ENCODE measurements at regions of chr1 and their contacts with region 1.

Region 1: GRCh38 chr1:67274623-67275325 is 32.9 kb upstream of the IL12RB2 start:
- DNase-seq: peak; percentile 55
- H3K4me3 Mint-ChIP-seq: no peak overlapping the region
- H3K27ac Mint-ChIP-seq: peak overlapping the region; percentile 90
- H3K4me1 Mint-ChIP-seq: peaks cover 55% of the 10 kb centered on the region
- H3K27me3 Mint-ChIP-seq: no peaks in the 10 kb centered on the region

Region 2: DNA sequence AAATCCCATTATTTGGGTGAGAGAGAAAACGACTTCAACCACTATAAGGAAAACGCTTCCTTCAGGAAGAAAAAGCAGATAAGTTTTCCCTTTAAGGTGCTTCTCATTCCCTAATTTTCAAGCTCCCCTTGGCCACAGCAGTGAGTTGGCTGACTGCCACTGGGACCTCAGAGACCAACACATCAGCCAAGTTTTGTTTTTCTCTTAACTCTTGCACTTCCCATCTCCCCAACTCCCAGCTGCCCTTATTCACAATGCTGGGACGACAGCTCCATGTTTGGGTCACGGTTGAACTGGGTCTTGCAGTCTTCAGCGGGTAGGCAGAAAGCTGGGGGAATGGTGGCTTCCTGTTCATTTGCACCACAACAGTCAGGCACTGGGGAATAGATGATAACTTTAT is 721.9 kb before region 1 on chr1:
- CTCF ChIA-PET with region 1: no interaction called
- intact Hi-C with region 1: no loop called
- DNase-seq: no peak
- H3K4me3 Mint-ChIP-seq: no peak overlapping the region
- H3K27ac Mint-ChIP-seq: no peak overlapping the region
- H3K4me1 Mint-ChIP-seq: no peaks in the 10 kb centered on the region
- H3K27me3 Mint-ChIP-seq: peaks cover 8% of the 10 kb centered on the region

Region 3: DNA sequence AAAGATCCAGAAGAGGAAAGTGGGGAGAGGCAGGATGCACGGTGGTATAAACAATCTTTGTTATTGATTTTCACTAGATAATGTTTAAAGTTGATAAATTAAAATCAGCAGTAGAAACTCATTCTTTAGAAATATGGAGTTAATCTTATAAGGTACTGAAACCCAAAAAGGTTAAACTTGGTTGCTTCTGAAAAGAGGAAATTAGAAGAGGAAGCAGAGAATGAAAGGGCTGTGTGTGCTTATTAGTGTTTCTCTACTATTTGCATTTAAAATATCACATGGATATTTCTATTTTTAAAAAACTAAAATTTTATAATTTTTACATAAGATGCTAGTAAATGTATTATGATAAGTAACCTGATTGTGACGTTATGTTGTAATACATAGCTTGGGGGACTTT is 164.4 kb before region 1 on chr1:
- CTCF ChIA-PET with region 1: no interaction called
- intact Hi-C with region 1: no loop called
- DNase-seq: no peak
- H3K4me3 Mint-ChIP-seq: no peak overlapping the region
- H3K27ac Mint-ChIP-seq: no peak overlapping the region
- H3K4me1 Mint-ChIP-seq: no peaks in the 10 kb centered on the region
- H3K27me3 Mint-ChIP-seq: no peaks in the 10 kb centered on the region

Region 4: DNA sequence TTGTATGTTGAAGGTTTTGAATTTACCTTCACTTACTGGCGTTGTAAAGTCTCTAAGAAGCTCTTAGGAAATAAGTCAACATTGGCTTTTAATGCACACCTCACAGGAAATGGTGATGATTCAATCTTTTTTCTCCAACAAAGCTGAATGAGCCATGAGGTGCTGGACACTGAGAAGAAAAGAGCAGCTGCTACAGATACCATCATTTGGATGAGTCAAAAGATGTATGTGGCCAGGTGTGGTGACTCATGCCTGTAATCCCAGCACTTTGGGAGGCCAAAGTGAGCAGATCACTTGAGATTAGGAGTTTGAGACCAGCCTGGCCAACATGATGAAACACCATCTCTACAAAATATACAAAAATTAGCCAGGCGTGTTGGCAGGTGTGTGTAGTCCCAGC is 111.8 kb before region 1 on chr1:
- CTCF ChIA-PET with region 1: no interaction called
- intact Hi-C with region 1: loop called (anchors 1 kb)
- DNase-seq: peak; percentile 76
- H3K4me3 Mint-ChIP-seq: peak overlapping the region; percentile 42
- H3K27ac Mint-ChIP-seq: peak overlapping the region; percentile 83
- H3K4me1 Mint-ChIP-seq: peaks cover 63% of the 10 kb centered on the region
- H3K27me3 Mint-ChIP-seq: no peaks in the 10 kb centered on the region

Region 5: DNA sequence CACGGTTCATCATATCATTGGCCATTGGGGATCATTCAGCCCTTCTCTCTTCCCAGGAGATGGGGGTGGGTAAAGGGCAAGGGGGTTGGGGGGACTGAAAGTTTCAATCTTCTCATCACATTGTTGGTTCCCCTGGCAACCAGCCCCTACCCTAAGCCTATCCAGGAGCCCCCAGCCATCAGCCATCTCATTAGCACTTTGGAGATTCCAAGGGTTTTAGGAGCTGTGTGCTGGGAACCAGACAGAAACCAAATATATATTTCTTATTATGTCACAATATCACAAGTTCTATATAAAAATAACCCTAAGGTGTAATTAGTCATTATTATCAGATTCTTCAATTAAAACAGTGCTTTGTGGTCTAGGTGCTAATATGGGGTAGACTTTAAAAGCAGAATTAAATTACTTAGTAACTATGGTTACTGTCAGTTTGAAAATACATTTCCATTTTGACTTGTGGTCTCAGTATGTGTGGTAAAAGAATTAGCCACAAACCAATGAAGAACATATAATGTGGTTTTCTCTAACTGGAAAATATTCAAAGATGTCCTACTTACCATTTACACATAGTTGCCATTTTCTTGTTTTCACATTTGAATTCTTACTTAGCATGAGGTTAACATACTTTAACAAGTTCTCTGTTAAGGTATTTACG is 80.4 kb before region 1 on chr1:
- CTCF ChIA-PET with region 1: no interaction called
- intact Hi-C with region 1: loop called (anchors 1 kb)
- DNase-seq: no peak
- H3K4me3 Mint-ChIP-seq: no peak overlapping the region
- H3K27ac Mint-ChIP-seq: no peak overlapping the region
- H3K4me1 Mint-ChIP-seq: peaks cover 39% of the 10 kb centered on the region
- H3K27me3 Mint-ChIP-seq: no peaks in the 10 kb centered on the region

Region 6: DNA sequence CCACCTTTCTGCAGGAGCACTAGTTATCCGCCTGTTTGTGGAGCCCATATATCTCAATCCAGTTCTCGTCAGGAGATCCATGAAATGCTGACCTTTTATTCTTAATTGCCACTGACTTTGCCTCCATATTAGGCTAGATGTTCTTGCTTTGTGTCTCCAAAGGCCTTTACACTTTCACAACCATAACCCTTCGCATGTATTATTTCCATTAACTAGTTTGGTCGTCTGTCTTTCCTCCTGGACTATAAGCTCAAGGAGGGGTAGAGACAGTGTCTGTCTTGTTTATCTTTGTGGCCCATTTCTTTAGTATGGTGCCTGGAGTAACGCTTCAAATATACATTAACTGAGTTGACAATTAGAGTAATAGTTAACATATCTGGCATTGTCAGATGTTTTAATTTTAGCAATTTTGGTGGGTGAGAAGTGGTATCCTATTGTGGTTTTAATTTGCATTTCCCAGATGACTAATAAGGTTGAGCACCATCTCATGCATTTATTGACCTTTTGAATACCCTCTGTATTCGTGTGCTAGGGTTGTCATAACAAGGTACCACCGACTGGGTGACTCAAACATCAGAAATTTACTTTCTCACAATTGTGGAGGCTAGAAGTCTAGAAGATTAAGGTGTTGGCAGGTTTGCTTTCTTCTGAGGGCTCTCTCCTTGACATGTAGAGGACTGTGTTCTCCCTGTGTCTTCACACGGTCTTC is 11.2 kb after region 1 on chr1:
- CTCF ChIA-PET with region 1: interaction called, 24 read pairs
- intact Hi-C with region 1: loop called (anchors 1 kb)
- DNase-seq: peak; percentile 55
- H3K4me3 Mint-ChIP-seq: no peak overlapping the region
- H3K27ac Mint-ChIP-seq: peak overlapping the region; percentile 65
- H3K4me1 Mint-ChIP-seq: peaks cover 52% of the 10 kb centered on the region
- H3K27me3 Mint-ChIP-seq: no peaks in the 10 kb centered on the region

Region 7: DNA sequence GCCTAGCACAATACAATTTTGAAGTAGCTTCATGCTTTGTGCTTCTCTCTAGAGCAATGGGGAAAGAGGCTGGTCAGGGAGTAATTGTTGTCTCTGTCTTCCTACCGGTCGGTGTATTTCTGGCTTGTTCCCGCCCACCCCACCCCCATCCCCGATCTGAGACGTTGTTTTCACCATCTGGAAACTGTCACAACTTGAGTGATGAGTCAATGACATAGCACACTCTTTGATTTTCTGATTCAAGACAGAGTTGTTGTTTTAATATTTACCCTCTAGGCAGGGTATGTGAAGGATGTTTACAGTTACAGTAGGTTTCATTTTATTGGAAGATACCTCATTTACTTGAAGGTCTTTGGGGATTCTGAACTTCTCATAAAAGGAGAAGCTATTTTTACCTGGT is 39.9 kb after region 1 on chr1:
- CTCF ChIA-PET with region 1: interaction called, 4 read pairs
- intact Hi-C with region 1: loop called (anchors 1 kb)
- DNase-seq: peak; percentile 56
- H3K4me3 Mint-ChIP-seq: peak overlapping the region; percentile 47
- H3K27ac Mint-ChIP-seq: peak overlapping the region; percentile 95
- H3K4me1 Mint-ChIP-seq: peaks cover 46% of the 10 kb centered on the region
- H3K27me3 Mint-ChIP-seq: no peaks in the 10 kb centered on the region

Region 8: DNA sequence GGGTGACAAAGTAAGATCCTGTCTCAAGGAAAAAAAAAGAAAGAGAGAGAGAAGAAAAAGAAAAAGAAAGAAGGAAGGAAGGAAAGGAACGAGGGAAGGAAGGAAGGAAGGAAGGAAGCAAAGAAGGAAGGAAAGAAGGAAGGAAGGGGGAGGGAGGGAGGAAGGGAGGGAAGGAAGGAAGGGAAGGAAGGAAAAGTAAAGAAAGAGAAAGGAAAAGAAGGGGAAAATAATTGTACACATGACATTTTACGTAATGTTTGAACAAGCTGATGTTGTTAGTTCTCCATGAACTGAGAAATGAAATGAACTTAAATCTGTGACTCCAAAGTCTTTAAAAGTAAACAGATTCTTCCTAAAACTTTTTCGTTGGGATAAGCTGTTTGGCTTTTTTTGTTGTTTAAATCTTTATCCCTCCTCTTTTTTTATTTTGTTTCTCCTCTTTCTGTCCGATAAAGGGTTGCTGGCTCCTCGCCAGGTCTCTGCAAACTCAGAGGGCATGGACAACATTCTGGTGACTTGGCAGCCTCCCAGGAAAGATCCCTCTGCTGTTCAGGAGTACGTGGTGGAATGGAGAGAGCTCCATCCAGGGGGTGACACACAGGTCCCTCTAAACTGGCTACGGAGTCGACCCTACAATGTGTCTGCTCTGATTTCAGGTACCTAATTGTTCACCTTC is 92.7 kb after region 1 on chr1:
- CTCF ChIA-PET with region 1: no interaction called
- intact Hi-C with region 1: no loop called
- DNase-seq: no peak
- H3K4me3 Mint-ChIP-seq: no peak overlapping the region
- H3K27ac Mint-ChIP-seq: peak overlapping the region; percentile 58
- H3K4me1 Mint-ChIP-seq: peaks cover 18% of the 10 kb centered on the region
- H3K27me3 Mint-ChIP-seq: no peaks in the 10 kb centered on the region

Measured in activated naive CD4-positive, alpha-beta T cell treated with anti-CD3 and anti-CD28 coated beads for 36 hours (primary cell).